Psoas muscle (tissue), 8 donors: ENCODE measurements at regions of chr19 and their contacts with region 1.

Region 1: GRCh38 chr19:47745010-47745901 is at the start of gene NOP53:
- DNase-seq: peak; percentile 97 to 98
- ATAC-seq: peak; percentile 84 to 91 (median 86)
- H3K4me3 ChIP-seq: peak within 1 kb of the TSS; percentile 92
- H3K27ac ChIP-seq: peak within 1 kb of the TSS; percentile 98
- H3K4me1 ChIP-seq: peaks cover 30% of the 10 kb centered on the region
- H3K27me3 ChIP-seq: no peaks in the 10 kb centered on the region
- CTCF ChIP-seq: no peak
- total RNA-seq, gene NOP53: 96.3 to 166 (median 127) TPM

Region 2: DNA sequence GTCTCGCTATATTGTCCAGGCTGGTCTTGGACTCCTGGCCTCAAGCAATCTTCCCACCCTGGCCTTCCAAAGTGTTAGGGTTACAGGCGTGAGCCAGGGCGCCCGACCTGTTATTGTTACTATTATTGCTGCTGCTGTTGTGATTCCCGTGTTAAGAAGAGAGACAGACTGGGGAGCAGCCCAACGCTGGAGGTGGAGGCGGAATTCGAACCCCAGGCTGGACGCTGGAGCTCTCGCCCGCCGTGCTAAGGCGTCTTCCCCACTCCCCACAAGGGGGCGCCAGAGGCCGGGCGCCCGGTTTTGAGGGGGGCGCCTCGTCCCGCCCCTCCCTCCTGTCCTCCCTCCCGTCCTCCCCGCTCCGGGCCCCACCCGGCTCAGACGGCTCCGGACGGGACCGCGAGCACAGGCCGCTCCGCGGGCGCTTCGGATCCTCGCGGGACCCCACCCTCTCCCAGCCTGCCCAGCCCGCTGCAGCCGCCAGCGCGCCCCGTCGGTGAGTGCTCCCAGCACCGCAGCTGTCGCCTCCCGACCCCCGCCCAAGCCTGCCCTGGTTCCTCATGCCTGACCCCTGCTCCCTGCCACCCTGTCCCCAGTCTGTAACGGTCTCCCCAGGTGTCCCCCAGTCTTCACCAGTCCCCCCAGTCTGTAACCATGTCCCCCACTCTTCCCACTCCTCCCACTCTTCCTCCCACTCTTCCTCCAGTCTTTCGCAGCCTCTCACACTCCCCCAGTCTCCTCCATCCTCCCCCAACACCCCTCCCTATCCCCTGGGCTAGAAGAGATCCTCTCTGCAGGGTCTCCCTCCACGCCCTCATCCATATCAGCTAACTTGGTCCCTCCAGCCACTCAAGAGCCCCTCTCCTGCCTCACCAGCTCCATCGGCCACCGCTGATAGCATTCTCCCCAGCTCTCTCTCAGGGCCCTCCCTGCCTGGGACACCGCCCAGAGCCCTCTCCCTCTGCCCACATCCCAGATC is 31.9 kb before region 1 on chr19 and contains the start of gene EHD2:
- intact Hi-C with region 1: loop called in 1 of 2 experiments (anchors 2 kb)
- DNase-seq: peak; percentile 77 to 85
- ATAC-seq: peak; percentile 74 to 85 (median 80)
- H3K4me3 ChIP-seq: peak within 1 kb of the TSS; percentile 66
- H3K27ac ChIP-seq: peak within 1 kb of the TSS; percentile 55
- H3K4me1 ChIP-seq: peaks cover 5% of the 10 kb centered on the region
- H3K27me3 ChIP-seq: peaks cover 0 to 51% (median 15%) of the 10 kb centered on the region in 3 donors
- CTCF ChIP-seq: peak; percentile 82
- total RNA-seq, gene EHD2: 27.8 to 46.3 (median 31.7) TPM

Region 3: GRCh38 chr19:47722749-47723140 is 22.5 kb before region 1 on chr19:
- intact Hi-C with region 1: loop called in 1 of 2 experiments (anchors 1 kb)
- DNase-seq: no peak
- ATAC-seq: no peak
- H3K4me3 ChIP-seq: peak overlapping the region; percentile 33
- H3K27ac ChIP-seq: peak overlapping the region; percentile 19
- H3K4me1 ChIP-seq: peaks cover 5% of the 10 kb centered on the region
- H3K27me3 ChIP-seq: peaks cover 0 to 11% (median 2%) of the 10 kb centered on the region in 3 donors
- CTCF ChIP-seq: no peak

Region 4: GRCh38 chr19:47860602-47861297 is 115.5 kb after region 1 on chr19:
- intact Hi-C with region 1: no loop called
- DNase-seq: no peak
- ATAC-seq: no peak
- H3K4me3 ChIP-seq: no peak overlapping the region
- H3K27ac ChIP-seq: no peak overlapping the region
- H3K4me1 ChIP-seq: no peaks in the 10 kb centered on the region
- H3K27me3 ChIP-seq: peaks cover 0 to 11% (median 2%) of the 10 kb centered on the region in 3 donors
- CTCF ChIP-seq: no peak

Region 5: GRCh38 chr19:48618916-48619691 is 873.8 kb after region 1 on chr19 and contains the starts of genes RPL18 and SPHK2:
- intact Hi-C with region 1: no loop called
- DNase-seq: peak; percentile 98 to 99
- ATAC-seq: peak; percentile 88 to 90 (median 90)
- H3K4me3 ChIP-seq: peak within 1 kb of the TSS; percentile 99
- H3K27ac ChIP-seq: peak within 1 kb of the TSS; percentile 94
- H3K4me1 ChIP-seq: peaks cover 35% of the 10 kb centered on the region
- H3K27me3 ChIP-seq: no peaks in the 10 kb centered on the region
- CTCF ChIP-seq: no peak
- total RNA-seq, gene RPL18: 506 to 730 (median 645) TPM
- total RNA-seq, gene SPHK2: 4.1 to 12.8 (median 8.8) TPM